Activated CD4-positive, alpha-beta T cell treated with anti-CD3 and anti-CD28 coated beads, Interleukin-2, amount 10 ng/mL, durations not matched to agents 7 days and 5 days (primary cell): ENCODE measurements at regions of chr12 and their contacts with region 1.

Region 1: GRCh38 chr12:96489103-96490056 is at the start of gene CFAP54:
- DNase-seq: peak; percentile 96
- H3K4me3 Mint-ChIP-seq: peak within 1 kb of the TSS; percentile 80
- H3K27ac Mint-ChIP-seq: peak within 1 kb of the TSS; percentile 66
- H3K4me1 Mint-ChIP-seq: peaks cover 43% of the 10 kb centered on the region
- H3K27me3 Mint-ChIP-seq: peaks cover 11% of the 10 kb centered on the region
- total RNA-seq, gene CFAP54: 0.23 to 0.40 TPM

Region 2: DNA sequence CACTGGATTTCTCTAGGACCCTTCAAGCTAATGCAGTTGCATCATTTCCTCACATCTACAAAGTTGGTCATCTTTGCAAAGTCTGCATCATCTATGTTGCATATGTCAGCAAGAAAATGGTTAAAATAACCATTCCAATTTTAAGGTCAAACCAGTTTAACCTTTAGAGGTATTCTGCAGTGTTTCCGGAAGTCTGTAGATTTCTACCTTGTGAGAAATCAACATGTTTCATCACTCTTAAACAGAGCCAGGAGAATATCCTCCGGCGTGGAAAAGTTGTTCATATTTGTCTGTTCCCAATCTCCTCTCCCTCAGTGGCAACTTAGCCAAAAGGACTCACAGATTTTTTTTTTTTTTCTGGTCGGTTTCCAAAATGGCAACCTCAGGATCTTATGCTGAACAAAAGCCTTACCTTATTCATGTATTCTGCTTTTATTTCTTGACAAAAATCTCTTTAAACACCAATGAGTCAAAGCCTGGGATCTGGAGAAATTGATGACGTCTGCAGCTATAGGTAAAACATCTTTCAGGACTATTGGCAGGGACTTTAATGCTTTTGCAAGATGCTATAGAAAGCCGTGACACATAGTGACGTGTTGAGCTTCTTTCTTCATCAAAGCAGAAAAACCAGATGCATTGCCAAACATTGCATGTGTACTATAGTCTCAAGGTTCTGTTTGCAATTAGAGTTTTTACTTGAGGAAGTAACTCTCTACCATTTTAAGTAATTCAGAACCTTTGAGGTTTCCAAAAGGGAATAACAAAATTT is 73.2 kb before region 1 on chr12:
- CTCF ChIA-PET with region 1: interaction called, 13 read pairs
- POLR2A ChIA-PET with region 1: no interaction called
- DNase-seq: no peak
- H3K4me3 Mint-ChIP-seq: no peak overlapping the region
- H3K27ac Mint-ChIP-seq: no peak overlapping the region
- H3K4me1 Mint-ChIP-seq: peaks cover 49% of the 10 kb centered on the region
- H3K27me3 Mint-ChIP-seq: no peaks in the 10 kb centered on the region

Region 3: DNA sequence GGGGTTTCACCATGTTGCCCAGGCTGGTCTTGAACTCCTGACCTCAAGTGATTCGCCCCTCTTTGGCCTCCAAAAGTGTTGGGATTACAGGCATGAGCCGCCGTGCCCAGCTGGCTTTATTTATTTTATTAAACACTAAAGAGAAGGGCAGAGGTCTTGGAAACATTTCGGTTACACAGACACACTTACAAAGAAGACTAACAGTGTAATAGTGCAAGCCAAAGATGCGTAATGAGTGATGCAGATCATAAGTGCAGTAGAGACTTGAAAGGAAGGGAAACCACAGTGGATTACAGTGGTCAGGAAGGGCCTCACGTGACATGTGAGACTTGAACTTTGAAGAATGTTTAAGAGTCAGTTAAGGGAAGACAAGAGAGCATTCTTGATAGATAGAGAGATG is 55.3 kb before region 1 on chr12:
- CTCF ChIA-PET with region 1: interaction called, 10 read pairs
- POLR2A ChIA-PET with region 1: no interaction called
- DNase-seq: peak; percentile 87
- H3K4me3 Mint-ChIP-seq: peak overlapping the region; percentile 3
- H3K27ac Mint-ChIP-seq: peak overlapping the region; percentile 83
- H3K4me1 Mint-ChIP-seq: peaks cover 44% of the 10 kb centered on the region
- H3K27me3 Mint-ChIP-seq: no peaks in the 10 kb centered on the region

Region 4: DNA sequence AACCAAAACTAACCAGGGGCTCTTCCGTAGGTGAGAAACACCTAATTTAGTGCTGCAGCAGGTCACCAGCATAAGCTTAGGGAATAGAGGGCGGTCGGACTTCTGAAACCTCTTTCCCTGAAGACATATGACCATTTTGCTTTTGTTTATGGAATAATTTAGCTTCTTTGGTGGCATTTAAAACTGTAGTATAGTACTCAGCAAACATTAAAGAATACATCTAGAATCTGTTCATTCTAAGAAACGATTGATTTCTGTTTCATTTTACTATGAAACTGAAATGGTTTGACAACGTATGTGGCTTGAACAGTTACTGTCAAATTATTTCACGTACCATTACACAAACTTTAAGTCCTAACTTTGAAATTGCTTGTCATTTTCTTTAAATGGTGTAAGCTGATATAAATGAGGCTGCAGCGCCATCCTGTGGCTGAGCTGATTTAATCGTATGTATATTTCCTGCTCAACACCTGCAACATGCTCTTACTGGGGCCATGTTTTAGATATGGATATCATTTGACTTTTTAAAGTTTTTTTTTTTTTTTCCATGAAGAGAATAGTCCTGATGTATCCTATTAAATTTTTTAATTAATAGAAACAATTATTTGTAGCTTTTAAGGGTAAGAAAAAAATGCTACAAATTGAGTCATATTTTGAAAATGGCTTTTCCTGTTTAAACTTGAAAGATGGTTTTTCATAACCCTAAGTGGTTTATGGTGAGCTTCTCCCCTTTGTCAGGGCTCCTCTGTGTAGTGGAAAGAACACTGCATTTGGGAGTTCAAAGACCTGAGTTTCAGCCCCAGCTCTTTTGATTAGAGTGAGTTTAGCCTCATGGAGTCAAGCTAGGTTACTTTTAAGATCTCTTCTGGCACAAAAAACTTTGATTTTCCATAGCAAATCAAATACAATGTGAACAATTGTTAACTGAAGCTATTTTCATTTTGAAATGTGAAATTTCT is 27.4 kb after region 1 on chr12:
- CTCF ChIA-PET with region 1: interaction called, 16 read pairs
- POLR2A ChIA-PET with region 1: no interaction called
- DNase-seq: peak; percentile 92
- H3K4me3 Mint-ChIP-seq: peak overlapping the region; percentile 38
- H3K27ac Mint-ChIP-seq: peak overlapping the region; percentile 82
- H3K4me1 Mint-ChIP-seq: peaks cover 20% of the 10 kb centered on the region
- H3K27me3 Mint-ChIP-seq: peaks cover 2% of the 10 kb centered on the region

Region 5: GRCh38 chr12:96658124-96658725 is 168.8 kb after region 1 on chr12:
- CTCF ChIA-PET with region 1: no interaction called
- POLR2A ChIA-PET with region 1: no interaction called
- DNase-seq: no peak
- H3K4me3 Mint-ChIP-seq: no peak overlapping the region
- H3K27ac Mint-ChIP-seq: no peak overlapping the region
- H3K4me1 Mint-ChIP-seq: no peaks in the 10 kb centered on the region
- H3K27me3 Mint-ChIP-seq: peaks cover 2% of the 10 kb centered on the region